A549 (cell line): ENCODE measurements at regions of chr17 and their contacts with region 1.

Region 1: GRCh38 chr17:67800495-67800928 is 24.8 kb upstream of the BPTF start:
- DNase-seq: peak; percentile 80 to 86
- ATAC-seq: peak; percentile 93 to 98
- H3K4me3 ChIP-seq: no peak overlapping the region
- H3K27ac ChIP-seq: no peak overlapping the region
- H3K4me1 ChIP-seq: no peaks in the 10 kb centered on the region
- CTCF ChIP-seq: peak; percentile 71
- EP300 ChIP-seq: no peak
- POLR2A ChIP-seq: no peak
- RAD21 ChIP-seq: peak; percentile 71 to 93

Region 2: DNA sequence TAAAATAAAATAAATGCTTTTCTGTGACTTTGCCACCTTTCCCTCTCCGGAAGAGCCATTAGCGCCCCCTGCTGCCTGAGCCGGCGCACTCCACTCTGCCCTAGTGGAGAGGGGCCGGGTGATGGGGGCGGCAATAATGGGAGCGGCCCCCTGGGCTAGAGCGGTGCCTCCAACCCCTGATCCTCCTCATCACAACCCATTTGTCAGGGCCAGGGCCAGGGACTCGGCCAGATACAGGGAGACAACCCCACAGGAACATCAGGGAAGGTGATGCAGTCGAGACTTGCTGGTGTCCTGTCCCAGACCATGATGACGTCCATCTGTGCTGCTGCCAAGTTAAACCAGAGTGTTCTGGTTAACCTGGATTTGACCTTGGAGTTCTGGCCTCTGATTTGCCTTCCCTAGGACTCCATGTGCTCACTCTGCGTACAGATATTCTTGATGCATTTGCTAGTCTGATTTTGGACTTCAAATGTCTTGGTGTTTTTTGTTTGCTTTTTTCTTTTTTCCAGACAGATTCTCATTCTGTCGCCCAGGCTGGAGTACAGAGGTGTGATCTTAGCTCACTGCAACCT is 21.3 kb before region 1 on chr17:
- CTCF ChIA-PET with region 1: interaction called, 10 read pairs
- POLR2A ChIA-PET with region 1: interaction called, 3 read pairs
- DNase-seq: peak; percentile 66 to 86
- ATAC-seq: peak; percentile 98 to 99
- H3K4me3 ChIP-seq: peak overlapping the region; percentile 40
- H3K27ac ChIP-seq: peak overlapping the region; percentile 50 to 72
- H3K4me1 ChIP-seq: peaks cover 13% of the 10 kb centered on the region
- CTCF ChIP-seq: peak; percentile 81
- EP300 ChIP-seq: no peak
- POLR2A ChIP-seq: no peak
- RAD21 ChIP-seq: peak; percentile 59 to 63

Region 3: GRCh38 chr17:67813803-67814180 is 13.3 kb after region 1 on chr17:
- CTCF ChIA-PET with region 1: interaction called, 92 read pairs
- POLR2A ChIA-PET with region 1: no interaction called
- DNase-seq: no peak
- ATAC-seq: no peak
- H3K4me3 ChIP-seq: no peak overlapping the region
- H3K27ac ChIP-seq: no peak overlapping the region; a peak in 1 of 6 replicates
- H3K4me1 ChIP-seq: no peaks in the 10 kb centered on the region
- CTCF ChIP-seq: no peak
- EP300 ChIP-seq: no peak
- POLR2A ChIP-seq: no peak
- RAD21 ChIP-seq: no peak

Region 4: GRCh38 chr17:68108313-68109000 is 307.9 kb after region 1 on chr17:
- CTCF ChIA-PET with region 1: no interaction called
- POLR2A ChIA-PET with region 1: no interaction called
- DNase-seq: no peak
- ATAC-seq: no peak
- H3K4me3 ChIP-seq: no peak overlapping the region
- H3K27ac ChIP-seq: no peak overlapping the region
- H3K4me1 ChIP-seq: peaks cover 1% of the 10 kb centered on the region; the same call in 2 of the 3 replicates
- CTCF ChIP-seq: no peak
- EP300 ChIP-seq: no peak
- POLR2A ChIP-seq: no peak
- RAD21 ChIP-seq: no peak